GM12878 (cell line): ENCODE measurements at regions of chr5 and their contacts with region 1.

Region 1: GRCh38 chr5:116574367-116575325 is at the start of gene SEMA6A:
- DNase-seq: peak; percentile 81
- ATAC-seq: peak; percentile 68
- H3K4me3 ChIP-seq: peak within 1 kb of the TSS; percentile 85
- H3K27ac ChIP-seq: no peak within 1 kb of the TSS; the same call in 1 of the 2 replicates
- H3K4me1 ChIP-seq: peaks cover 14% of the 10 kb centered on the region
- H3K27me3 ChIP-seq: peaks cover 2 to 20% of the 10 kb centered on the region in 2 experiments
- CTCF ChIP-seq: peak in 1 of 3 experiments; percentile 14; a peak in 1 of 6 replicates
- EP300 ChIP-seq: peak in 1 of 2 experiments; percentile 51; a peak in 1 of 4 replicates
- POLR2A ChIP-seq: peak; percentile 67
- RAD21 ChIP-seq: no peak; the same call in 1 of the 2 replicates
- polyA plus RNA-seq, gene SEMA6A: 0.16 to 0.22 TPM

Region 2: GRCh38 chr5:115977988-115978387 is 596.7 kb before region 1 on chr5:
- CTCF ChIA-PET with region 1: no interaction called
- POLR2A ChIA-PET with region 1: no interaction called
- RAD21 ChIA-PET with region 1: no interaction called
- SMC1A ChIA-PET with region 1: no interaction called
- in situ Hi-C with region 1: no loop called
- intact Hi-C with region 1: no loop called
- DNase-seq: no peak
- ATAC-seq: peak; percentile 50
- H3K4me3 ChIP-seq: peak overlapping the region; percentile 17; the same call in 1 of the 2 replicates
- H3K27ac ChIP-seq: no peak overlapping the region; the same call in 1 of the 2 replicates
- H3K4me1 ChIP-seq: peaks cover 9% of the 10 kb centered on the region
- H3K27me3 ChIP-seq: no peaks in the 10 kb centered on the region
- CTCF ChIP-seq: no peak
- EP300 ChIP-seq: no peak
- POLR2A ChIP-seq: no peak
- RAD21 ChIP-seq: no peak

Region 3: DNA sequence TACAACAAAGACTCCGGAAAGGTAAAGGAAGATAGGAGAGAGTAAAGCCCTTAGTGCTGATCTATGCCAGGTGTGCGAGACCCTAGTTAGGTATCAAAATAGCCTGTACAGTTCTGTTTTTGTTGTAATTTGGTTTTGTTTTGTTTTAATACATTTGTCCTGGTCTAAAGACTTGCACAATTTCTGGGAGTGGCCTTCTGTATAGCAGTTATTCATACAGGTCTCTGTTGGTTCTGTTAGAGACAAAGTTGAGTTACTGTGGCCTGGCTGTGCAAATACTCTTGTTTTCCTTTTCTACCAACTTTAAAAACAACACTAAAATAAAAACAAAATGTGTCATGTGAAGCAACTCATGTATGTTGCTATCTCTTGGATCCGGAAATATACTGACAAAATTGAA is 326.2 kb before region 1 on chr5:
- CTCF ChIA-PET with region 1: no interaction called
- POLR2A ChIA-PET with region 1: no interaction called
- RAD21 ChIA-PET with region 1: no interaction called
- SMC1A ChIA-PET with region 1: no interaction called
- in situ Hi-C with region 1: no loop called
- intact Hi-C with region 1: no loop called
- DNase-seq: no peak
- ATAC-seq: no peak
- H3K4me3 ChIP-seq: no peak overlapping the region
- H3K27ac ChIP-seq: no peak overlapping the region
- H3K4me1 ChIP-seq: no peaks in the 10 kb centered on the region
- H3K27me3 ChIP-seq: no peaks in the 10 kb centered on the region
- CTCF ChIP-seq: no peak
- EP300 ChIP-seq: no peak
- POLR2A ChIP-seq: no peak
- RAD21 ChIP-seq: no peak

Region 4: DNA sequence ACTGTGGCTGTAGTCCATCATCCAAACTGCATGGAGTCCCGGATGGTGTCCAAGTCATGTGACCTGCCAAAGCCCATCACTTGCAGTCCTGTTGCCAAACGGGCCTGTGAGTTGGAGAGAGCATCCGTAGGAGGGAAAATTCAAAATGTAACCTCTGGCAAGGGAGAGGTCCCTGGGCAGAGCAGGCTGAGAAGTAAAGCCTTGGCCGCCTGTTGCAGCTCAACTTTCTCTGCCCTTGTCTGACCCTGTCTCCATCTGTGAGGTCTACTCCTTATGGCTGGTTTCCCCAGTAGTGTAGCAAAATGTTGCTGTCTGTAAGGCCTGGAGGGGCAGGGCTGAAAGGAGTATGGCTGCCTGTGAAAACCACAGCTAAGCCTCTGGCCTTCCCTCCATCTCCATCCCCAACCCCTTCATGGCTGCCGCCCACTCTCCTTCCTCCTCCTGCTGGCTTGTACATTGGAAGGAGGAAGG is 163.5 kb before region 1 on chr5:
- CTCF ChIA-PET with region 1: no interaction called
- POLR2A ChIA-PET with region 1: no interaction called
- RAD21 ChIA-PET with region 1: no interaction called
- SMC1A ChIA-PET with region 1: no interaction called
- in situ Hi-C with region 1: no loop called
- intact Hi-C with region 1: no loop called
- DNase-seq: no peak
- ATAC-seq: no peak
- H3K4me3 ChIP-seq: no peak overlapping the region
- H3K27ac ChIP-seq: no peak overlapping the region
- H3K4me1 ChIP-seq: no peaks in the 10 kb centered on the region
- H3K27me3 ChIP-seq: no peaks in the 10 kb centered on the region
- CTCF ChIP-seq: no peak
- EP300 ChIP-seq: no peak
- POLR2A ChIP-seq: no peak
- RAD21 ChIP-seq: no peak

Region 5: DNA sequence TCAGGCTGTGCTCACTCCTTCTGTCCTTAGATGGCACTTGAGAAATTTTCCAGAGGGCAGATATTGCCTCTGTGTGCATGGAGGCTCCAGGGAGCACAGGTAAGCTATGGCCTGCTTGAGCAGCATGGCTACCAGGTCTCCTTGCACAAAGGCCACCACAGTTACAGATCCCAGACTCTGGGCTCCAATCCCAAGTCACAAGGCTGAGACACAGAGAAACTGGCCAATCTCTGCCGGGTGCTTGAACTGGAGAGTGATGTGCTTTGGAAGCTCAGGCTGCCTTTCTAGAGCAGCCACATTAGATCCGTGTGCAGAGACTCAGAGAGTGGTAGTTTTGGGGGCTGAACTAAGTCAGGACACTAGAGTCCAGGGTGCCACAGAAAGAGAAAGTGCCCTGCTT is 145.7 kb before region 1 on chr5:
- CTCF ChIA-PET with region 1: no interaction called
- POLR2A ChIA-PET with region 1: no interaction called
- RAD21 ChIA-PET with region 1: no interaction called
- SMC1A ChIA-PET with region 1: no interaction called
- in situ Hi-C with region 1: no loop called
- intact Hi-C with region 1: no loop called
- DNase-seq: no peak
- ATAC-seq: no peak
- H3K4me3 ChIP-seq: no peak overlapping the region
- H3K27ac ChIP-seq: no peak overlapping the region
- H3K4me1 ChIP-seq: no peaks in the 10 kb centered on the region
- H3K27me3 ChIP-seq: no peaks in the 10 kb centered on the region
- CTCF ChIP-seq: no peak
- EP300 ChIP-seq: no peak
- POLR2A ChIP-seq: no peak
- RAD21 ChIP-seq: no peak

Region 6: DNA sequence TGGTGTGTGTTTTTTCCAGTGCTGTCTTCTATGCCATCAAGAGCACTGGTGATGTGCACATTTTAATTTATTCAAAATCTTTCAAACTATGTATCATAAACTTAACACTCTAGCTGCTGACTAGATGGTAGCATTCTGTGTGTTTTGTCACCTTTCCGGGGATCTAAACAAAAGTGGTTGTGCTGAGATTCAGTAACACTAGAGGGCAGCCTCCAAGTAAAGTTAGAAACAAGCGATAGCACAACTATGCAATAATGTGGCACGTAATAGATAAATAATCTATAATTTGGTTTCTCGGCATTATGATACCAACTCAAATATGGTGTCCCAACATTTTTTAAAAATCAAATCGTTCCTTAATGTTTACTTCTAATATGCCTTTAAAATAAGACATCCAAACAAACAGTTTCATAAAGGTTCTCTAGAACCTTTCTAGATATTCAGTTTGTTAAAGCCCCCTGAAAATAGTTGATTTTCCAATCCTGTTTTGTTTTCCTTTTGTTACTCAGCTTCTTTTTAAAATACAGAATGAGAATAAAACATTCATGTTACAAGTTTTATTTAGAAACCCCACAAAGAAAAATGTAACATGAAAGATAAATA is 16.9 kb before region 1 on chr5:
- CTCF ChIA-PET with region 1: interaction called, 38 read pairs
- POLR2A ChIA-PET with region 1: interaction called, 11 read pairs
- RAD21 ChIA-PET with region 1: interaction called, 29 read pairs
- SMC1A ChIA-PET with region 1: interaction called, 44 read pairs
- in situ Hi-C with region 1: no loop called
- intact Hi-C with region 1: no loop called
- DNase-seq: no peak
- ATAC-seq: peak; percentile 65
- H3K4me3 ChIP-seq: no peak overlapping the region
- H3K27ac ChIP-seq: no peak overlapping the region
- H3K4me1 ChIP-seq: no peaks in the 10 kb centered on the region
- H3K27me3 ChIP-seq: no peaks in the 10 kb centered on the region
- CTCF ChIP-seq: peak; percentile 48 to 61 (median 55); a peak in 5 of 6 replicates
- EP300 ChIP-seq: no peak
- POLR2A ChIP-seq: no peak
- RAD21 ChIP-seq: peak; percentile 79

Region 7: GRCh38 chr5:116632890-116633289 is 58.2 kb after region 1 on chr5:
- CTCF ChIA-PET with region 1: interaction called, 3 read pairs
- POLR2A ChIA-PET with region 1: interaction called, 10 read pairs
- RAD21 ChIA-PET with region 1: interaction called, 35 read pairs
- SMC1A ChIA-PET with region 1: interaction called, 35 read pairs
- in situ Hi-C with region 1: no loop called
- intact Hi-C with region 1: loop called (anchors 5 kb)
- DNase-seq: no peak
- ATAC-seq: peak; percentile 87
- H3K4me3 ChIP-seq: no peak overlapping the region
- H3K27ac ChIP-seq: no peak overlapping the region
- H3K4me1 ChIP-seq: peaks cover 3% of the 10 kb centered on the region; the same call in 1 of the 2 replicates
- H3K27me3 ChIP-seq: no peaks in the 10 kb centered on the region
- CTCF ChIP-seq: no peak
- EP300 ChIP-seq: peak in 1 of 2 experiments; percentile 24; a peak in 1 of 4 replicates
- POLR2A ChIP-seq: no peak
- RAD21 ChIP-seq: no peak

Region 8: GRCh38 chr5:116658141-116658749 is 83.6 kb after region 1 on chr5:
- CTCF ChIA-PET with region 1: interaction called, 42 read pairs
- POLR2A ChIA-PET with region 1: interaction called, 29 read pairs
- RAD21 ChIA-PET with region 1: interaction called, 112 read pairs
- SMC1A ChIA-PET with region 1: interaction called, 125 read pairs
- in situ Hi-C with region 1: loop called (anchors 5 kb)
- intact Hi-C with region 1: no loop called
- DNase-seq: no peak
- ATAC-seq: peak; percentile 52
- H3K4me3 ChIP-seq: no peak overlapping the region
- H3K27ac ChIP-seq: no peak overlapping the region
- H3K4me1 ChIP-seq: no peaks in the 10 kb centered on the region
- H3K27me3 ChIP-seq: no peaks in the 10 kb centered on the region
- CTCF ChIP-seq: no peak; a peak in 1 of 6 replicates
- EP300 ChIP-seq: no peak
- POLR2A ChIP-seq: no peak
- RAD21 ChIP-seq: no peak

Region 9: DNA sequence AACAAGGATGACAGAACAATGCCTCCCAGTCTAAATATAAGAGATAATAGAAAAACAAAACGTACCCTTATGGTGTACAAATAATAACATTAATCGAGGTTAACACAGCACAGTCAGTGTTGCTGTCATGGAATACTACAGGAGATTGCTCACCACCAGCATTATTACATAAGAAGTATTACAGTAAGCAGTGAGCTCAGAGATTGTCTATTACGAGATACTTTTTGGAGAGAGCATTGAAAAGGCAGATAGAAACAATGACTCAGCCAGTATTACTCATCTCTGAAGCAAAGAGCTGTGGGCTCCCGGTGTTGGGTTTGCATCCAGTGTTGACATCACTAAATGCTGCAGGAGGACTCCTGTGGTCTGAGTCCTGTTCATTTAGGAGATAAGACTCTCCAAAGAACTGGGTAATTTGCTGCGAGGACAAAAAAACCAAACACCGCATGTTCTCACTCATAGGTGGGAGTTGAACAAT is 191.9 kb after region 1 on chr5:
- CTCF ChIA-PET with region 1: interaction called, 52 read pairs
- POLR2A ChIA-PET with region 1: interaction called, 52 read pairs
- RAD21 ChIA-PET with region 1: interaction called, 217 read pairs
- SMC1A ChIA-PET with region 1: interaction called, 133 read pairs
- in situ Hi-C with region 1: loop called (anchors 5 kb)
- intact Hi-C with region 1: loop called (anchors 1 kb)
- DNase-seq: peak; percentile 70
- ATAC-seq: peak; percentile 46
- H3K4me3 ChIP-seq: peak overlapping the region; percentile 43; the same call in 1 of the 2 replicates
- H3K27ac ChIP-seq: no peak overlapping the region
- H3K4me1 ChIP-seq: peaks cover 25% of the 10 kb centered on the region
- H3K27me3 ChIP-seq: no peaks in the 10 kb centered on the region
- CTCF ChIP-seq: no peak
- EP300 ChIP-seq: peak in 1 of 2 experiments; percentile 71; a peak in 1 of 4 replicates
- POLR2A ChIP-seq: no peak
- RAD21 ChIP-seq: no peak

Region 10: GRCh38 chr5:117077142-117077541 is 502.5 kb after region 1 on chr5:
- CTCF ChIA-PET with region 1: interaction called, 3 read pairs
- POLR2A ChIA-PET with region 1: no interaction called
- RAD21 ChIA-PET with region 1: interaction called, 3 read pairs
- SMC1A ChIA-PET with region 1: interaction called, 3 read pairs
- in situ Hi-C with region 1: no loop called
- intact Hi-C with region 1: loop called (anchors 10 kb)
- DNase-seq: no peak
- ATAC-seq: peak; percentile 53
- H3K4me3 ChIP-seq: no peak overlapping the region
- H3K27ac ChIP-seq: no peak overlapping the region
- H3K4me1 ChIP-seq: no peaks in the 10 kb centered on the region
- H3K27me3 ChIP-seq: no peaks in the 10 kb centered on the region
- CTCF ChIP-seq: peak; percentile 40 to 56 (median 46)
- EP300 ChIP-seq: no peak
- POLR2A ChIP-seq: no peak
- RAD21 ChIP-seq: peak; percentile 53